Transverse colon (tissue), 4 donors: ENCODE measurements at regions of chr5 and their contacts with region 1.

Region 1: GRCh38 chr5:59367791-59368394 is 525.6 kb downstream of the PDE4D start:
- DNase-seq: peak; percentile 66
- H3K4me3 ChIP-seq: no peak overlapping the region
- H3K27ac ChIP-seq: peak overlapping the region in 1 of 4 donors; percentile 43
- H3K4me1 ChIP-seq: peaks cover 0 to 11% (median 6%) of the 10 kb centered on the region in 4 donors
- H3K27me3 ChIP-seq: no peaks in the 10 kb centered on the region
- CTCF ChIP-seq: peak; percentile 58 to 73 (median 65)
- EP300 ChIP-seq: no peak
- POLR2A ChIP-seq: no peak

Region 2: DNA sequence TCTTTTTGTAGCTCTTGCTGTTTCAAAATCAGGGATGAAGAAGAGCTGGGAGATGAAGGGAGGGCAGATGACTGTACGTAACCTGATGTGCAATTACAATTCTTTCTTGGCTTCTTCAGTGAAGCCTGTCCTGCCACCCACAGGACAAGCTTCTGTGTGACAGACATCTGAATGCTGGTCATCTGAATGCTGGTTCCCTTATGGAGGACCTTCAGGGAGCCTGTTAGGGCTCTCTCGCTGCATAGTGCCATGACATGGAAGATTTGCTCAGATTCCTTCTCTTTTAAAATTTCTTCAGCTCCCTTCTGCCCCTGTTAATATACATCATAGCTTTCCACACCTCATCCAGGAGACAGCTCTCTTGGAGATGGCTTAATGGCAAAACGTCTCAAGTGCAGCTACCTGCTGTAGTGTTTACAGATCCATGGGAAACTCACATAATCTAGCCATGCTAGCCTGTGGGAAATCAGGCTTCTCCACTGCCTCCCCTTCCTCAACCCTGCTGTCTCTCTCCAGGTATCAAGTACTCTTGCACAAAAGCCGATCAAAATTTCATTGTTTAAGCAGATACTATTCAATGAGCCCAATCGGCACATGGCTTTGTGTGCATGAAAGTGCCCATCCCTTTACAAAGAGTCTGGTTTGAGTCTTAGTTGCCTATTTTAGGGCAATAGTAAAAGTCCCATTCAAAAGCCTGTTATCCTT is 650.4 kb before region 1 on chr5:
- in situ Hi-C with region 1: no loop called
- intact Hi-C with region 1: no loop called
- DNase-seq: no peak
- H3K4me3 ChIP-seq: no peak overlapping the region
- H3K27ac ChIP-seq: no peak overlapping the region
- H3K4me1 ChIP-seq: no peaks in the 10 kb centered on the region
- H3K27me3 ChIP-seq: peaks cover 3% of the 10 kb centered on the region
- CTCF ChIP-seq: no peak
- EP300 ChIP-seq: no peak
- POLR2A ChIP-seq: no peak

Region 3: DNA sequence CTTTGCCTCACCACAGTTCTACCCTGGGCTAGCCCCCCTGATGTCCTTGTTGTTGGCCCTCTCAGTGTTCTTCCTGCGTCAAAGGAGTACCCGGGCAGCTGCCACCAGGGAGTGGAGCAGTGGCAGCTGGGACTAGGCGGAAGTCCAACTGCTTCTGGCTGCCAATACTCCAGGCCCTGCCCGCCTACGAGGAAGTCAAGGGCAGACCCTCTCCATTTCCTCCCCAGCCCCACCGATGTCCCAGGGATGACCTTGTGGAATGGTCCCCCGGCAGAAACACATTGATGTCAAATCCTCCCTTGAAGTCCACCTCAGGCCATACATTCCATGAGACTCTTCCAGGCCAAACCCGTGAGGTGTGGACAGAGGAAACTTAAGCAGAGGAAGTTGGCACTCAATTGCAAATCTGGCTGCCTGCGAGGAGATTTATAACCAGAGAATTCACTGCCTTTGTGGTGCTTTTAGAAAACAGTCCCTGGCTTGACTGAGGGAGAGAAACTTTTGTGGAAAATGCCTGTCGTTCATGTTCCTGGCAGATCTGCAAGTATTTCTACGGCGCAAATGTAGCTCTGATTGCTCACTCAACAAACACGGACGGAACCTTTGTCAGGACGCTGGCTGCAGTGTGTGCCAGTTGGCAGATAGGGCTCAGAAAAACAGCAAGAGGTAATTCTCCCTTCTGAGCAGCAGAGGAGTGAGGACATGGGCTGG is 445.3 kb before region 1 on chr5:
- in situ Hi-C with region 1: loop called in 1 of 4 experiments (anchors 25 kb)
- intact Hi-C with region 1: no loop called
- DNase-seq: peak; percentile 72
- H3K4me3 ChIP-seq: no peak overlapping the region
- H3K27ac ChIP-seq: peak overlapping the region; percentile 67 to 75 (median 72)
- H3K4me1 ChIP-seq: peaks cover 5 to 27% (median 17%) of the 10 kb centered on the region in 4 donors
- H3K27me3 ChIP-seq: no peaks in the 10 kb centered on the region
- CTCF ChIP-seq: peak in 1 of 5 experiments; percentile 20
- EP300 ChIP-seq: no peak
- POLR2A ChIP-seq: no peak

Region 4: GRCh38 chr5:59218424-59219045 is 149.4 kb before region 1 on chr5:
- in situ Hi-C with region 1: no loop called
- intact Hi-C with region 1: no loop called
- DNase-seq: no peak
- H3K4me3 ChIP-seq: no peak overlapping the region
- H3K27ac ChIP-seq: peak overlapping the region in 1 of 4 donors; percentile 69
- H3K4me1 ChIP-seq: peaks cover 11 to 57% (median 36%) of the 10 kb centered on the region in 4 donors
- H3K27me3 ChIP-seq: no peaks in the 10 kb centered on the region
- CTCF ChIP-seq: peak; percentile 42 to 70 (median 56)
- EP300 ChIP-seq: no peak
- POLR2A ChIP-seq: no peak